Panc1 (cell line): ENCODE measurements at regions of chr10 and their contacts with region 1.

Region 1: GRCh38 chr10:13457958-13458686 is 70.7 kb downstream of the BEND7 start:
- DNase-seq: no peak
- ATAC-seq: no peak
- H3K4me3 ChIP-seq: no peak overlapping the region
- H3K27ac ChIP-seq: no peak overlapping the region
- H3K4me1 ChIP-seq: no peaks in the 10 kb centered on the region
- H3K27me3 ChIP-seq: no peaks in the 10 kb centered on the region
- CTCF ChIP-seq: no peak

Region 2: GRCh38 chr10:13445656-13446400 is 12.3 kb before region 1 on chr10:
- CTCF ChIA-PET with region 1: no interaction called
- POLR2A ChIA-PET with region 1: no interaction called
- in situ Hi-C with region 1: no loop called
- intact Hi-C with region 1: loop called (anchors 1 kb)
- DNase-seq: no peak
- ATAC-seq: no peak
- H3K4me3 ChIP-seq: no peak overlapping the region
- H3K27ac ChIP-seq: no peak overlapping the region
- H3K4me1 ChIP-seq: no peaks in the 10 kb centered on the region
- H3K27me3 ChIP-seq: no peaks in the 10 kb centered on the region
- CTCF ChIP-seq: no peak